Breast epithelium (tissue), 4 donors: ENCODE measurements at regions of chr9 and their contacts with region 1.

Region 1: GRCh38 chr9:72661401-72662135 is 140.2 kb downstream of the TMC1 start:
- DNase-seq: no peak
- H3K4me3 ChIP-seq: no peak overlapping the region
- H3K27ac ChIP-seq: no peak overlapping the region
- H3K4me1 ChIP-seq: no peaks in the 10 kb centered on the region
- H3K27me3 ChIP-seq: no peaks in the 10 kb centered on the region
- CTCF ChIP-seq: no peak
- POLR2A ChIP-seq: no peak

Region 2: DNA sequence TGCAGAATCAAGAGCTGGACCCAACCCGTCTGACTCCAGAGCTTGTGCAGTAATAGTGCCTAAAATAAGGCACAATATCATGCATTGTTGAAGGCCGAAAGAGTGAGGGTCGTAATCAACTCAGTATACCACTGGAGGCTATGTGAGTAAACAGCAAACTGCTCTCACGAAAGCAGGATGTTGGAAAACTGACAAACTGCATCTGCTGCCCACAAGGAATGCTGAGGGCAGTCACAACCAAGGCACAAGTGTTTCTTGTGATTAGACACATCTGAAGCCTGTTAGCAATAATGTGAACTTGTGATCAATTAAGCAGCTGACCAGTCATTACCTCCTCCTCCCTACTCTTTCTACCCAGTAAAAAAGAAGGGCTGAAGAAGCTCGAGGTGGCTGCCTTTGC is 1589.0 kb before region 1 on chr9:
- intact Hi-C with region 1: loop called (anchors 10 kb)
- DNase-seq: no peak
- H3K4me3 ChIP-seq: no peak overlapping the region
- H3K27ac ChIP-seq: no peak overlapping the region
- H3K4me1 ChIP-seq: no peaks in the 10 kb centered on the region
- H3K27me3 ChIP-seq: no peaks in the 10 kb centered on the region
- CTCF ChIP-seq: no peak
- POLR2A ChIP-seq: no peak

Region 3: GRCh38 chr9:73050887-73051550 is 389.5 kb after region 1 on chr9:
- intact Hi-C with region 1: no loop called
- DNase-seq: no peak
- H3K4me3 ChIP-seq: no peak overlapping the region
- H3K27ac ChIP-seq: no peak overlapping the region
- H3K4me1 ChIP-seq: no peaks in the 10 kb centered on the region
- H3K27me3 ChIP-seq: no peaks in the 10 kb centered on the region
- CTCF ChIP-seq: no peak
- POLR2A ChIP-seq: no peak

Region 4: DNA sequence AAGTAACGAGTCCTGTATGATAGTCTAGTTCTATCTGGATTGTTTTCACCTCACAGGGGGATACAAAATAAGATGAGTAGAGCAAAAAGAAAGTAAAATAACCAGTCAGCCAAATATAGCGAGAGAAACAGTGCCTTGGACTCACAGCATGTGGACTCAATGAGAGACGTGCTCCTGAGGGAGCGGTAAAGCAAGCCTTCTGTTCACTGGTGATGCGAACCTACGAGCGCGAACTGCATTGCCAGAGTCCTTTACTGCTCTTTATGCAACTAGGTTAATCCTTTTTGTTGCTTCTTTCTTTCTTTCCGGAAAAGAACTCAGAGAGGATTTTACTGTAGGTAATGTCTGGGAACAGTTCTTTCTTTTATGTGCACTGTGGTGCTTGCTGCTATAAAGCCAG is 622.8 kb after region 1 on chr9:
- intact Hi-C with region 1: no loop called
- DNase-seq: no peak
- H3K4me3 ChIP-seq: no peak overlapping the region
- H3K27ac ChIP-seq: no peak overlapping the region
- H3K4me1 ChIP-seq: no peaks in the 10 kb centered on the region
- H3K27me3 ChIP-seq: no peaks in the 10 kb centered on the region
- CTCF ChIP-seq: no peak
- POLR2A ChIP-seq: no peak